Naive thymus-derived CD8-positive, alpha-beta T cell (primary cell): ENCODE measurements at regions of chr5 and their contacts with region 1.

Region 1: DNA sequence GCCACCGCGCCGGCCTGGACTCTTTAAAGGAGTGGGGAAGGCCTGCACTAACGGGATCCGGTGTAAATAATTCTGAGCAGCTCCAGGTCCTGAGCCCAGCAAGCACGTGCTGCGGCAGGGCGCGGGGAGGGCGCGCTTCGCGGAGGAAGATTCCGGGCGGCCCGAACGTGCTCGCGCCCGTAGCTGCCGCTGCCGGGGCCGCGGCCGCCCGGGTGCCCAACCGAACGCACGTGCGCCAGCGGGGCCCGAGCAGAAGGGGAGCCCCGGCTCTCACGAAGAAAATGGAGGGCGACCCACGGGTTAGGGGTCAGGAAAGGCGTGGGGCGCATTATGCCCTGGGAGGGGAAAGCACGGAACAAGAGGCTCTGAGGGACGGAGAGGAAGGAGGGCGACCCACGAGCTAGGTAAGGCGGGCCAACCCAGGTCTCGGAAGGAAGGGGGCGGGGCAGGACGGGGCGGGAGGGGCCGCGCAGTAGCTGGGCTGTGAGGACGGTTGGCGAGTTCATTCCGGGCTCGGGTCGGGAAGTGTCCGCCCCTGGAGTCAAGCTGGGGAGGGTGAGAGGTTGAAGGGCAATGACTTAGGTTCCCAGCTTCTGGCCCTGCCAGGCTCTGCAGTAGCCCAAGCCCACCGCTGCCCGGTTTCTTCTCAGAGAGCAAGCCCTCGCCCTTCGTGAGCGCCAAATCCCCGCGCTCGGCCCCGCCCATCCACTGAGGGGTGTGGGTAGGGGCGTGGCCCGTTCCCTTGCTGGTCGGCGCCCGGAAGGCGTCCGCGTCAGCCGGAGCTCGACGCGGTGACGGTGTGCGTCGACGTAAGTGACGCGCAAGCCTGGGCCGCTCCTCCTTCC is at the start of gene ZNF131:
- DNase-seq: peak; percentile 95 to 99 (median 97)
- ATAC-seq: peak; percentile 77 to 86
- H3K4me3 Mint-ChIP-seq: peak within 1 kb of the TSS; percentile 89 to 100 (median 94)
- H3K27ac Mint-ChIP-seq: peak within 1 kb of the TSS; percentile 93 to 99 (median 98)
- H3K4me1 Mint-ChIP-seq: peaks cover 15 to 45% (median 39%) of the 10 kb centered on the region in 4 donors
- H3K27me3 Mint-ChIP-seq: no peaks in the 10 kb centered on the region
- polyA plus RNA-seq, gene ZNF131: 51.8 to 57.1 (median 55.5) TPM

Region 2: DNA sequence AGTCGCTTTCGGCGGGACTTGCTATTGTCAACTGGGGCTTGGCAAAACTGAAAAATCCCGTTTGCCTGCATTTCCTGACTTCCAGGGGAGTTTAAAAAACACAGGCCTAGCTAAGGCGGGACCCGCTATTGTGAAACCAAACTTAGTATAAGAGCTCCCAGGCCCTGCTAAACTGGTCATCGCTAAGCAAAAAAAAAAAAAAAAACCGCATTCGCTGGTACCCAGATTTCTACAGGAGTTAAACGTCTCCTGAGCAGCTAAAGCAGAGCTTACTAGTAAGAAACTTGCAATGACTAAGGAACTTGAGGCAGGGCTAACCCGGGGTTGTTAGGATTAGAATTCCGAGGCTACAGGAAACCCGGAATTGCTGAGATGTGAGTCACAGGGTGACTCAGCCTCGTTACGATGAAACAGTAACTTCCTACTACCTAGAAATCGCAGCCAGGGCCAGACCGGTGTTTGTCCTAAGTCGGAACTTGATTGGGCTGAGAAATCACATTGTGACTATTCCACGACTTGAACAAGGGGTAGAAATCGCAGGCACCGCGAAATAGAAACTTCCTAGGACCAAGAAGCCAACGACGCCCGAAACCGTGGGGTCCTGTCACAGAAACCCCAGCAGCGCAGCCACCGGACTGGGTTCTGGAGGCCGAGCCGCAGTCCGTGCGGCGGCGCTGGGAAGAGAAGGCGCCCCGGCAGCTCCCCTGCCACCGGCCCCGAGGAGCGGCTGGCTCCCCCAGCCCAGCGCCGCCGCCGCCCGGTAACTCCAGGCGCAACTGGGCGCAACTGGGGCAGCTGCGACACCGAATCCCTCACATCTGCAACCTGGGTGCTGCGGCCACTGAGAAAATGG is 170.3 kb before region 1 on chr5:
- POLR2A ChIA-PET with region 1: interaction called, 17 read pairs
- DNase-seq: peak in 8 of 10 donors; percentile 27 to 72 (median 54)
- ATAC-seq: peak; percentile 8 to 37
- H3K4me3 Mint-ChIP-seq: peak overlapping the region; percentile 91 to 99 (median 96)
- H3K27ac Mint-ChIP-seq: peak overlapping the region; percentile 99 to 100 (median 100)
- H3K4me1 Mint-ChIP-seq: peaks cover 13 to 36% (median 26%) of the 10 kb centered on the region in 4 donors
- H3K27me3 Mint-ChIP-seq: no peaks in the 10 kb centered on the region

Region 3: GRCh38 chr5:43008369-43009153 is 112.4 kb before region 1 on chr5:
- POLR2A ChIA-PET with region 1: interaction called, 53 read pairs
- DNase-seq: peak; percentile 80 to 96 (median 91)
- ATAC-seq: peak; percentile 63 to 71
- H3K4me3 Mint-ChIP-seq: peak overlapping the region; percentile 83 to 99 (median 94)
- H3K27ac Mint-ChIP-seq: peak overlapping the region; percentile 92 to 100 (median 99)
- H3K4me1 Mint-ChIP-seq: peaks cover 17 to 40% (median 28%) of the 10 kb centered on the region in 4 donors
- H3K27me3 Mint-ChIP-seq: no peaks in the 10 kb centered on the region

Region 4: DNA sequence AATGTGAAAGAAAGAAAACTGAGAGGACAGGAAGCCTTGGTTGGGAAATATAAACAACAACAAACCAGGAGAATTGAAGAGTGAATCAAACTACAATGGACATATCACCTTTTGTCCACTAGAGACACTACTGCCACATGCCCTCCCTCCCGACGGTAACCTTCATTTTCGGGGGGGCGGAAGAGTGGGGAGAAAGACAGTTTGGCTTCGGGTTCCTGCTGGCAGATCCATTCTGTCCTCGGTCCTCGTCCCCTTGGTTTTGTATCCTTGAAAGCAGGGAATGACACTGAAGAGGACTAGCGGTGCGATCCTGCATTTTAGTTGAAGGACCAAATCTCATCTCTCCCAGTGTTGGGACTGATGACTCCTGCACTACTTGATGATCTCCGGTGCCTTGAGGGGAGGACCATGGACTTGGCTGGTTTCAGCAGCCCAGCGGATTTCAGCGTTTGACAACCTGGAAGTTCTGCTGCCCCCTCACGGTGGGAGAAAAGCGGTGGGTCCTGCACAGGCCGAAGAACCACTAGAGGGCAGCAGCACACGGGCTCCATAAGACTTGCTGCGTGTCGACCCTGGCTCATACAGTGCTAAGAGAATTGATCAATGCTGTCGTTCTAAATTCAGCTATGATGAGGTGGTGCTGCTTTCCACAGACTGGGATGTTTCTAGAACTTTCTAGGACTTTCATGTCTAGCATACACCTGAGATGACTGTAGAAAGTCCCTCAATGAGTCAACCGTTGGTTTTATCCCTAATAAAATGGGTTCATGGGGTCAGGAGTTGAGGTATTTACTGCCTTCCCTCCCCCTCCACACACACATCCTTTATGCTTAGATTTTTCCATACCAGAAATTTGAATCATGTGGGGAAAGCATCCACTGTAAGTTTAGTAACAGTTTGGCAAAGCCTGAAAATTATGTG is 15.3 kb before region 1 on chr5:
- POLR2A ChIA-PET with region 1: interaction called, 188 read pairs
- DNase-seq: peak; percentile 78 to 94 (median 87)
- ATAC-seq: peak; percentile 95 to 97
- H3K4me3 Mint-ChIP-seq: peak overlapping the region; percentile 77 to 91 (median 87)
- H3K27ac Mint-ChIP-seq: peak overlapping the region; percentile 72 to 93 (median 82)
- H3K4me1 Mint-ChIP-seq: peaks cover 14 to 39% (median 35%) of the 10 kb centered on the region in 4 donors
- H3K27me3 Mint-ChIP-seq: no peaks in the 10 kb centered on the region

Region 5: GRCh38 chr5:43305948-43306565 is 185.1 kb after region 1 on chr5:
- POLR2A ChIA-PET with region 1: no interaction called
- DNase-seq: peak in 4 of 10 donors; percentile 24 to 58 (median 51)
- ATAC-seq: peak; percentile 77 to 85
- H3K4me3 Mint-ChIP-seq: no peak overlapping the region
- H3K27ac Mint-ChIP-seq: peak overlapping the region in 3 of 10 donors; percentile 26 to 68 (median 34)
- H3K4me1 Mint-ChIP-seq: peaks cover 15 to 53% (median 41%) of the 10 kb centered on the region in 4 donors
- H3K27me3 Mint-ChIP-seq: no peaks in the 10 kb centered on the region

Region 6: GRCh38 chr5:43396762-43397304 is 275.9 kb after region 1 on chr5:
- POLR2A ChIA-PET with region 1: interaction called, 14 read pairs
- DNase-seq: peak; percentile 38 to 80 (median 62)
- ATAC-seq: peak; percentile 95 to 96
- H3K4me3 Mint-ChIP-seq: peak overlapping the region; percentile 94 to 100 (median 96)
- H3K27ac Mint-ChIP-seq: peak overlapping the region; percentile 94 to 100 (median 96)
- H3K4me1 Mint-ChIP-seq: peaks cover 19 to 47% (median 46%) of the 10 kb centered on the region in 4 donors
- H3K27me3 Mint-ChIP-seq: no peaks in the 10 kb centered on the region

Region 7: GRCh38 chr5:43602461-43603343 is 481.8 kb after region 1 on chr5 and contains the start of gene NNT:
- POLR2A ChIA-PET with region 1: interaction called, 10 read pairs
- DNase-seq: peak; percentile 67 to 86 (median 76)
- ATAC-seq: peak; percentile 79 to 85
- H3K4me3 Mint-ChIP-seq: peak within 1 kb of the TSS; percentile 91 to 100 (median 94)
- H3K27ac Mint-ChIP-seq: peak within 1 kb of the TSS; percentile 91 to 98 (median 94)
- H3K4me1 Mint-ChIP-seq: peaks cover 30 to 70% (median 55%) of the 10 kb centered on the region in 4 donors
- H3K27me3 Mint-ChIP-seq: no peaks in the 10 kb centered on the region
- polyA plus RNA-seq, gene NNT: 38.8 to 52.7 (median 49.5) TPM